ENCODE measurements at regions of chr18 and their contacts with region 1.

Region 1: GRCh38 chr18:59814891-59815290 is 84.9 kb upstream of the PMAIP1 start:
- DNase-seq: no peak
- H3K4me3 Mint-ChIP-seq: no peak overlapping the region
- H3K27ac Mint-ChIP-seq: no peak overlapping the region
- H3K4me1 Mint-ChIP-seq: peaks cover 2% of the 10 kb centered on the region
- H3K27me3 Mint-ChIP-seq: peaks cover 32% of the 10 kb centered on the region

Region 2: GRCh38 chr18:59763541-59764136 is 51.3 kb before region 1 on chr18:
- intact Hi-C with region 1: loop called (anchors 5 kb)
- DNase-seq: no peak
- H3K4me3 Mint-ChIP-seq: no peak overlapping the region
- H3K27ac Mint-ChIP-seq: no peak overlapping the region
- H3K4me1 Mint-ChIP-seq: no peaks in the 10 kb centered on the region
- H3K27me3 Mint-ChIP-seq: no peaks in the 10 kb centered on the region

Region 3: GRCh38 chr18:59988098-59988706 is 173.3 kb after region 1 on chr18:
- intact Hi-C with region 1: no loop called
- DNase-seq: no peak
- H3K4me3 Mint-ChIP-seq: no peak overlapping the region
- H3K27ac Mint-ChIP-seq: no peak overlapping the region
- H3K4me1 Mint-ChIP-seq: no peaks in the 10 kb centered on the region
- H3K27me3 Mint-ChIP-seq: peaks cover 27% of the 10 kb centered on the region